Ascending aorta (tissue), 2 donors: ENCODE measurements at regions of chr13 and their contacts with region 1.

Region 1: DNA sequence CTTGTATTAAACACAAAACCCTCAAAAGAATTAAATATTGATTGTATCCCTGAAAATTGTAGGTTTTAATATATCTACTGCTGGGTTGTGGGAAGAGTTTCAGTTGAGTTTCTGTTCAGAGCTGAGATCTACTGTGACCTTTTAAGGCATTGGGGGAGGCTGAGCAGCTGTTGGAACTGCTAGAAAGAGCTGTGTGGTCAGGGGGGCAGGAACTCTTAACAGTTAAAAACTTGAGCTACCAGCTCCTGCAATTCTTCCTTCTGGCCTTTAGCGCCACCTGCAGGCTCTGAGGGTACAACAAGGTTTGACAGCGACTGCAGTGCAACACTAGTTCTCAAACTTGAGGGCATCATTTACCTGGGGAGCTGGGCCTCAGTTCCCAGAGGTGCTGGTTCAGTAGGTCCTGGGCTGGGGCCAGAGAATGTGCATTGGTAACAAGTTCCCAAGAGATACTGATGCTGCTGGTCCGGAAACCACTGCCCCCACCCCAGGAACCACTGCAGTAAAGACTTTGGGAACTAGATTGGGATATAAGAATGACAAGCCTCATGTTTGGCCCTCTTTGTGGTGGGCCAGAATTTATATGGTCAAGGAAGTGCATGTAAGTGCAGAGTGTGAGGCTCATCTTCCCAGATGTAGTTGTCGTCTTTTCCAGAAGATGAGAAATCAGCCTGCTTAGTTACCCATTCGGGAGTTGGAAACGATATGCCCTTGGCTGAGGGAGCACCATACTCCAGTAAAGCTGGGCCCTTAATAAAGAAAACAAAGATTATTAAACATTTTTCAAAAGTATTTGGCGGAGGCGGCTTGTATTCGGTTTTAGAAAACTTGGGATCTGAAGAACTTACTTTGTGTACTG is 2.6 kb downstream of the RNASEH2B start:
- DNase-seq: peak; percentile 65 to 92
- H3K4me3 ChIP-seq: peak overlapping the region in 1 of 2 donors; percentile 90
- H3K27ac ChIP-seq: peak overlapping the region in 1 of 2 donors; percentile 14
- H3K4me1 ChIP-seq: peaks cover 16 to 20% of the 10 kb centered on the region in 2 donors
- H3K27me3 ChIP-seq: no peaks in the 10 kb centered on the region
- CTCF ChIP-seq: peak; percentile 69 to 87 (median 76)

Region 2: DNA sequence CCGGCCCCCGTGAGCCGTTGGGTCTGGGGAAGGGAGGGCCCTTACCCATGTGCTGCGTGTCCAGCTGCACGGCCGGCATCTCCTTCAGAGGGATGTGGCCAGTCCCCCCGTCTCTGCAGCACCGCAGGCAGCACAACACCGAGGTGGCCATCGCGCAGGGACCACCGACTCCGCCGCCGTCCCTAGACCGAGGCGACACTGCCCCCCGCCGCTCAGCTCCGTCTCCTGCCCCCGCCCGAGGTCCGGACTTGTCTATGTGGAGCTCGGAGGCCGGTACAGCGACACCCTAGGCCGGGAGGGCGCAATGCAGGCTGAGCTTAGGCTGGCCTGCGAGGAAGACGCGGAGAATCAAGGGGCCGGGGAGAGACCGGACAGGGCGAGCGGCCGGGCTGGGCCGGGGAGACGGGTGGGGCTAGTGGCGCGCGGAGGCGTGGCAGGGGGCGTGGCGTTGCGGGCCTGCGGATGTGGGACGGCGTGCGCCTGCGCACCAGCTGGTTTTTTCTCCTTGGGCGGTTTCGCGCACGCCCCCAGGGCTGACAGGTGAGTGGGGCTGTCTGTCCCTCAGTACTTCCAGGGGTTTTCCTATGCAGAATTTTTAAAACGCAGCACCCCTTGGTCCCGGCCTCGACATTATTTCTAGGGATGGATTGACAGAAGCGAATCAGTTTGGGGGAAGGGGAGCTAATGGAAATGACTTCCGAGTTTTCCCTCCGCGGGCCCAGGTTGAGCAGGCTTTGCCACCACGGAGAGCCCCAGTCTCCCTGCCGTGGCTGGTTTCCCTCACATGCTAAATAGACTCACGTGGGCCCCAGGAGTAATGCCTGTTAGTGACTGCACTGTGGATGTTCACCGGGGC is 975.9 kb before region 1 on chr13 and contains the start of gene SPRYD7:
- intact Hi-C with region 1: loop called (anchors 5 kb)
- DNase-seq: peak; percentile 92 to 99
- H3K4me3 ChIP-seq: peak within 1 kb of the TSS; percentile 78 to 97
- H3K27ac ChIP-seq: peak within 1 kb of the TSS; percentile 78 to 93
- H3K4me1 ChIP-seq: peaks cover 0 to 17% of the 10 kb centered on the region in 2 donors
- H3K27me3 ChIP-seq: no peaks in the 10 kb centered on the region
- CTCF ChIP-seq: peak; percentile 89 to 97 (median 94)
- total RNA-seq, gene SPRYD7: 1.7 TPM

Region 3: DNA sequence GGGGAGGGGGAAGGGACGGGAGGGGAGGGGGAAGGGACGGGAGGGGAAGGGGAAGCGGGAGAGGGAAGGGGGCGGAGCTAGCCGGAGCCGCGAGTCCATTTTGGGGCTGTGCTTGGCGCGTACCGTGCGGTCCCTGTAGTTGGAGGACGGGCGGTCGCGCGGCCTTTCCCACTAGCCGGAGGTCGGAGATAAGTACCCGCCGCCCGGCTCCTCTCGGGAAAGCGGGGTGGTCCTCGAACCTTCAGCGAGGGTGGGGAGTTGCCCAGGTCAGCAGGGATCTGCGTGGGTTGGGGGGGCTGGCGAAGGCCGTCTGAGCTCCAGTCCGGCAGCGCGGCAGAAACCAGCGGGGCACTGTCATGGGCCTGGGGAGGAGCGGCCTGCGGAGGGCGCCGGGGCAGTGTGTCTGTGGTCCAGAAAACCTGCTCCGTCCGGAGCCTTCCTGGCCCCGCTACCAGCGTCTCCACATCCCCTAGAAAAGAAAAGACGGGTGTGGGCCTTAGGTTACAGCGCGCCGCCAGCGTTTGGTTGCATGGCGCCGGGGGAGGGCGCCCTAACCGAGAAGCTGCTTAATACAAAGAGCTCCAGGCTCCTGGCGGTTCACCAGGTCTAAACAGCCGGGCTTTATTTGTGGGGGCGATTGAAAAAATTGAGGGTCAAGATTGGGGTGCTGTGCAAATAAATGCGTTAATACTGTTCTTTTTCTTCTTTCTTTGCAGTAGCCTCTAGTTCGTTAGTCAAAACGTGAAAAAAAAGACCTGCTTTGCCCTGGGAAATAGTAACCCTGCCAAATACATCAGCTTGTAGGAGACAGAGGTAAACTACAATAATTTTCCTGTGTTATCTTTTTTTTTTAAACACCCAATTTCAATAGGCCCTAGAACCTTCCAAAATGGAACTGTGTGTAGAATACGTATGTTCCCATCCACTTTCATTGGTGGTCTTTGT is 914.9 kb before region 1 on chr13 and contains the start of gene TRIM13:
- intact Hi-C with region 1: loop called (anchors 1 kb)
- DNase-seq: peak; percentile 74 to 96
- H3K4me3 ChIP-seq: peak within 1 kb of the TSS; percentile 96 to 99
- H3K27ac ChIP-seq: peak within 1 kb of the TSS; percentile 99 to 100
- H3K4me1 ChIP-seq: peaks cover 13 to 40% of the 10 kb centered on the region in 2 donors
- H3K27me3 ChIP-seq: no peaks in the 10 kb centered on the region
- CTCF ChIP-seq: peak; percentile 61 to 84 (median 78)
- total RNA-seq, gene TRIM13: 13.4 TPM

Region 4: DNA sequence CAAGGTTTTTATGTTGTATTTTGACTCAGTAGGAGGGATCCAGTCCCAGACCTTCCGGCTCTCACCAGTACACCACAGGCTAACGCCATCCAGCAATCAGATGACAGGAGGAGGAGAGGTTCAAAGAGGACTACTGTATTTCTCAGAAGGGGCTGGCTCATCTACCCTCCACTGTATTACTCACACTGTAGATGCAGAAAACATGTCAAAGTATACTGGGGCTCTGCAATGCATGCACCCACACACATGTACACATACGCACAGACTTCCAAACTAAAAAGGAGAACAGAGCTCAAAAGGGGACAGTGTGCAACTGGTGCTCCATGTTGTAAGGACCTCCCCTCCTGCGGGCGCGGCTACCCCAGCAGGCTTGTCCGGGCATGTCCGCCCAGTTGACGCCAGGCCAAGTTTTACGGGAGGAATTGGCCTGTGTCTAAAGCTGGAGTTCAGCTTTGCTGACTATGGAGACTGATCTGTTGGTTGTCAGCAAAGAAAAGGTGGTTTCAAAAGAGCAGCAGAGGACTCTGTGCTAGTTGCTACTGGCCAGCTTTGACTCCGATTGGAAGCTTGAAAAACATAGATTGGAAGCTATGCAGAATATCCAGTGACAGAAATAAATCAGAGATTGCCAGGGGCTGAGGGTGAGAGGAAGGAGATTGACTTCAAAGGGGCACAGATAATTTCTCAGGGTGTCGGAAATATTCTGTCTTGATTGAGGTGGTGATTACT is 382.8 kb before region 1 on chr13:
- intact Hi-C with region 1: loop called (anchors 5 kb)
- DNase-seq: peak in 1 of 2 donors; percentile 78
- H3K4me3 ChIP-seq: peak overlapping the region; percentile 24 to 48
- H3K27ac ChIP-seq: peak overlapping the region; percentile 62 to 63
- H3K4me1 ChIP-seq: peaks cover 18 to 24% of the 10 kb centered on the region in 2 donors
- H3K27me3 ChIP-seq: no peaks in the 10 kb centered on the region
- CTCF ChIP-seq: no peak

Region 5: DNA sequence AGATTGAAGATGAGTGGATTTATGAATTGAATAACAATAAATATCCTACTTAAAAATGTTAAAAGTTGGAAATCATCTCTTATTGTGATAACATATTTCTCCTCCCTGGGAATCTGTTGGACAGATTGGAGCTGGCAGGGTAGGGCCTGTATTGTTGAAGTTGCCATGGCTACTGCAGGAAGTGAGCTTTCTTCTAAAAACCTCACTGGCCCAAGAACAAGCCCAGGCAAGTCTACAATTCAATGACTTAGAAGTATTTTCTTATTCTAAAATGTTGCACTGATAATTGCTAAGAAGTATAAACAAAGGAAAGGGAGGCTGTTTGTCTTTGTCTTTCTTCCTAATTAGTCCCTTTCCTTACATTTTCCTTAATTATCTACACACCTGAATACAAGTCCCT is 180.8 kb before region 1 on chr13:
- intact Hi-C with region 1: no loop called
- DNase-seq: no peak
- H3K4me3 ChIP-seq: no peak overlapping the region
- H3K27ac ChIP-seq: no peak overlapping the region
- H3K4me1 ChIP-seq: no peaks in the 10 kb centered on the region
- H3K27me3 ChIP-seq: no peaks in the 10 kb centered on the region
- CTCF ChIP-seq: no peak

Region 6: DNA sequence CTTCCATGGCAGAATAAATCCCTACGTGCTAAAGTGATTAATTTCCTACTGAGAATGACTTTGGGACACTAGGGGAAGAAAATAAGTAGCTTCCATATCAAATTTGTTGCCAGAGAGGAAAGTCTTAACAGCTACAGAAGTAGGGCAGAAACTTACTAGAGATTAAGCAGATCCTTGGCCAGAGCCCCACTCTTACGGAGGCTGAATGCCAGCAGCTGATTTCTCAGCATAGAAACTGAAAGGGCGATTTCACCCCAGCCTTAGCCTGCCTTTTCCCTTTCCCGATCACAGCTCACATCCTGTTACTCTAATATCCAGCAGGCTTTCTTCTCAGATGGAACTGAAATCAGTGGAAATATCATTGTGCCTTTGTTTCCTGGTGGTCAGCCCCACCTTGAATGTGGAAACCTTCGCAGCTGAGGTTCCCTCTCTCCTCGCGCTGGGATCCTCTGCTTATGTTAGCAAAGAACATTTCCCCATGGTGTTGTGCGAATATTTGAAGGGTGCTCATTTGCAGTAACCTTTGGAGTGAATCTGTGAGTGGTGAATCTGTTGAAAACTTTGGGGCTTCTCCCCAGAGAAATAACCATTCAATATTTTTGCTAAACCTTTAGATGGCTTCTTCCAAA is 318.4 kb after region 1 on chr13:
- intact Hi-C with region 1: no loop called
- DNase-seq: peak in 1 of 2 donors; percentile 71
- H3K4me3 ChIP-seq: peak overlapping the region; percentile 31 to 56
- H3K27ac ChIP-seq: peak overlapping the region; percentile 47 to 62
- H3K4me1 ChIP-seq: no peaks in the 10 kb centered on the region
- H3K27me3 ChIP-seq: no peaks in the 10 kb centered on the region
- CTCF ChIP-seq: no peak

Region 7: DNA sequence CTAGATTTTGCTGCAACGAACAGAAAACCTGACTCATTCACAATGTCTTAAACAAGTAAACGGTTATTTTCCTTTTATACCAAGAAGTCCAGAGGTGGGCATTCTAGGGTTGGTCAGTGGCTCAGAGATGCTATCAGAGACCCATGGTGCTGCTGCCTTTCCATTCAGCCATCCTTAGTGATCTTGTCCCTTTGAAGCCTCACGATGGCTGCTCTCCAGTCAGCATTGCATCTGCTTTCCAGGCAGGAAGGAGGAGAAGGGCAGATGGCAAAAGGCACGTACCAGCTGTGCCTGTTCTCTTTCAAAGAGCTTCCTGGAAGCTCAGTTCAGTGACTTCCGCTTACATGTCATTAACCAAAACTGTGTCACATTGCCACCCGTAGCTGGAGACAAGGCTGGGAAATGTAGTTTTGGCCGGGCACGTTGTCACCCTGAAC is 702.2 kb after region 1 on chr13:
- intact Hi-C with region 1: no loop called
- DNase-seq: peak in 1 of 2 donors; percentile 63
- H3K4me3 ChIP-seq: no peak overlapping the region
- H3K27ac ChIP-seq: peak overlapping the region; percentile 44 to 58
- H3K4me1 ChIP-seq: peaks cover 8 to 27% of the 10 kb centered on the region in 2 donors
- H3K27me3 ChIP-seq: no peaks in the 10 kb centered on the region
- CTCF ChIP-seq: no peak

Region 8: DNA sequence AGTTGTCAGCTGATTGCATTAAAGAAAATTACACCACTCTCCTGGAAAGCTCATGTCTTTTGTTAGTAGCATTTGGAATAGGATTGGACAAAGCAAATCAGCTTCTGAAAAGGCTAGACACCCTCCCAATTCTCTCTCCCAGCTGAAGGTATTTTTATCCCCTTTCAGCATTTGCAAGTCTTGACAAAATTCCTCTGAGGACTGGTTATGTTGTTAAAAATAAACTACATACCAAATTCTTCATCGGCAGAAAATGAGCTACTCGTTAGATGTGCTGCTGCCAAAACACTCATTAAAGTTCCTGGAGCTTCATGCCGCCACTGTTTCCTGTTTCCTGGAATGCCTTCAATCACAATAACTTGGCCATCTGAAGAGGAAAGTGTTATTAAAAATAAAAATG is 1149.4 kb after region 1 on chr13:
- intact Hi-C with region 1: no loop called
- DNase-seq: no peak
- H3K4me3 ChIP-seq: no peak overlapping the region
- H3K27ac ChIP-seq: no peak overlapping the region
- H3K4me1 ChIP-seq: peaks cover 0 to 6% of the 10 kb centered on the region in 2 donors
- H3K27me3 ChIP-seq: no peaks in the 10 kb centered on the region
- CTCF ChIP-seq: no peak